Ascending aorta (tissue), 2 donors: ENCODE measurements at regions of chr16 and their contacts with region 1.

Region 1: GRCh38 chr16:27549859-27550581 is at the starts of genes GTF3C1 and KATNIP:
- DNase-seq: peak; percentile 97 to 100
- H3K4me3 ChIP-seq: peak within 1 kb of the TSS; percentile 85 to 97
- H3K27ac ChIP-seq: peak within 1 kb of the TSS; percentile 78 to 79
- H3K4me1 ChIP-seq: peaks cover 0 to 21% of the 10 kb centered on the region in 2 donors
- H3K27me3 ChIP-seq: no peaks in the 10 kb centered on the region
- CTCF ChIP-seq: no peak
- total RNA-seq, gene GTF3C1: 40.6 TPM
- total RNA-seq, gene KATNIP: 6.6 TPM

Region 2: GRCh38 chr16:27579087-27579980 is 29.3 kb after region 1 on chr16:
- intact Hi-C with region 1: loop called (anchors 1 kb)
- DNase-seq: no peak
- H3K4me3 ChIP-seq: no peak overlapping the region
- H3K27ac ChIP-seq: peak overlapping the region; percentile 61 to 69
- H3K4me1 ChIP-seq: peaks cover 0 to 7% of the 10 kb centered on the region in 2 donors
- H3K27me3 ChIP-seq: no peaks in the 10 kb centered on the region
- CTCF ChIP-seq: no peak